HEK293T (cell line): ENCODE measurements at regions of chr14 and their contacts with region 1.

Region 1: DNA sequence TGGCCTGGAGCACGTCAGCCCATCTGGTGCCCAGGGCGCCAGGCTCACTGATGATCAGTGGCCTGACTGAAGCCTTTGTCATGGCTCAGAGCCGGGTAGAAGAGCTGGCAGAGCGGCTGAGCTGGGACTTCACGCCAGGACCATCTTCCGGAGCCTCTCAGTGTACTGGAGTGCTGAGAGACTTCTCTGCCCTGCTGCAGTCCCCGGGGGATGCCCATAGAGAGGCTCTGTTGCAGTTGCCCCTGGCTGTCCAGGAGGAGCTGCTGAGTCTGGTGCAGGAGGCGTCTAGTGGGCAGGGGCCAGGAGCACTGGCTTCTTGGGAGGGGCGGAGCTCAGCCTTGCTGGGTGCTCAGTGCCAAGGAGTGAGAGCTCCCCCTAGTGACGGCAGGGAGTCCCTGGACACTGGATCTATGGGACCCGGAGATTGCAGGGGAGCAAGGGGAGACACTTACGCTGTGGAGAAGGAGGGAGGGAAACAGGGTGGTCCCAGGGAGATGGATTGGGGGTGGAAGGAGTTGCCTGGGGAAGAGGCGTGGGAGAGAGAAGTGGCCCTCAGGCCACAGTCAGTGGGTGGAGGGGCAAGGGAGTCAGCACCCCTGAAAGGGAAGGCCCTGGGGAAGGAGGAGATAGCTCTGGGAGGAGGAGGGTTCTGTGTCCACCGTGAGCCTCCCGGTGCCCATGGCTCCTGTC is 2.0 kb downstream of the KHNYN start:
- DNase-seq: peak; percentile 86

Region 2: GRCh38 chr14:24299255-24300195 is 132.2 kb before region 1 on chr14 and contains the starts of genes DHRS1 and NOP9:
- CTCF ChIA-PET with region 1: interaction called, 5 read pairs
- POLR2A ChIA-PET with region 1: interaction called, 13 read pairs
- DNase-seq: peak; percentile 95

Region 3: DNA sequence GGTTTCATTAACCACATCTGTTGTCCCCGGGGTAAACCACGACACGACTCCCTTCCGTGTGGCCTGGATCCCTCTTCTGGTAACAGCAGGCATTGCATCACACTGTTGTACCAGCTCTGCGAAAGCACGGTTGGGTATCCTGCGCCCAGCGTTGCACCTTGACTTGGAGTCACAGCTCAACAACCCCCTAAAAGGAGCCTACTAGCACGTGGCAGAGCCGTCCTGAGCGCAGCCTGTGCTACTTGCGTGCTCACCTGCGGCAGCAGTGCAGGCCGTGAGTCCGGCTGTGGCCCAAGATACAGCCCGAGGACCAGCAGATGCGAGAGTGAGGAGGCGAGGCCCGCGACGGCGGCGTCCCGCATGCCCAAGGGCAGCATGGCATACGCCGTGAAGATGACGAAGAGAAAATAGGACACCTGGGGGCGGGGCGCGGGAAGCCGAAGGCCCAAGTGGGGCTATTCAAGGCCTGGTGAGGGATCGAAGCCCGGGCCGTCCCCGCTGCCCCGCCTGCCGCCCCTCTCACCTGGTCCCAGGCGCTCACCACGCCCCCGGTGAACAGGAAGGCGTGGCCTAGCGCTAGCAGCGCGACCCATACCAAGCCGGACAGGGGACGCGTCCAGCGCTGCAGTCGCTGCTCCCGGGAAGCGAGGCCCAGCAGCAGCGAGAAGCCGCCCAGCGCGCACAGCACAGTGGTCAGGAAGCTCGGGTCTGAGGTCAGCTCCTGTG is 99.3 kb before region 1 on chr14:
- CTCF ChIA-PET with region 1: interaction called, 145 read pairs
- POLR2A ChIA-PET with region 1: interaction called, 37 read pairs
- DNase-seq: peak; percentile 71

Region 4: DNA sequence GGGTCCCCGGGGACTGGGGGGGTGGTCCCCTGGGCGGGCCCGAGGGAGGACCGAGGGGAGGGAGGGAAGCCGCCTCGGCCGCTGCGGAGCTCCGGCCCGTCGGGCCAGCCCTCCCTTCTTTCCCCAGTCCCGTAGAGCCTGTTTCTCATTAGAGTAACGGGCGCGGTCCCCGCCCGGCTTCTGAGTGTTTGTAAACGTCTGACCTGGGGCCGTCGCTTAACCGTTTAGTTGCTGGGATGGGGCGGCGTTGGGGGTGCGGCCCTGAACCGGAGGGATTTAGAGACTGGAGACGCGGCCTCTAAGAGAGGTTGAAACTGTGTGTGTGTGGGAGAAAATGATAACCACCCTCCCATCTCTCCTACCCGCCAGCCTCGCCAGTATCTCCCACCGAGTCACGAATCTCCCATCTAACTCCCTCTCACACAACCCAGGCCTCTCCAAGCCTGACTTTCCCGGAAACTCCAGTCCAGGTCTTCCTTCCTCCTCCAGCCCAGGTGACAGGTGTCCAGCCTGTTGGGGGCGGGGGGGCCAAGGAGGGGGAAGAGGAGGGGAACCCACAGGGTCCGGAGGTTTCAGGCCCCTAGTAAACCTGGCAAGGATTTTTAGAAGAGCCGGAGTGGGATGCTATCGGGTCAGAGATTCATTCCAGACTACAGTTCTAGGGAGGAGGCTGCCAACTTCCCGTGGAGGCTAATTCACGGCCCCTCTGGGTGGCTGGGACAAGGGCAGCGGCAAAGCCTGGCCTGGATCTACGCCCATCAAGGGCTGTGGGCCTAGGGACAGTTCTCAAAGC is 64.8 kb before region 1 on chr14:
- CTCF ChIA-PET with region 1: interaction called, 68 read pairs
- POLR2A ChIA-PET with region 1: interaction called, 28 read pairs
- DNase-seq: peak; percentile 74

Region 5: DNA sequence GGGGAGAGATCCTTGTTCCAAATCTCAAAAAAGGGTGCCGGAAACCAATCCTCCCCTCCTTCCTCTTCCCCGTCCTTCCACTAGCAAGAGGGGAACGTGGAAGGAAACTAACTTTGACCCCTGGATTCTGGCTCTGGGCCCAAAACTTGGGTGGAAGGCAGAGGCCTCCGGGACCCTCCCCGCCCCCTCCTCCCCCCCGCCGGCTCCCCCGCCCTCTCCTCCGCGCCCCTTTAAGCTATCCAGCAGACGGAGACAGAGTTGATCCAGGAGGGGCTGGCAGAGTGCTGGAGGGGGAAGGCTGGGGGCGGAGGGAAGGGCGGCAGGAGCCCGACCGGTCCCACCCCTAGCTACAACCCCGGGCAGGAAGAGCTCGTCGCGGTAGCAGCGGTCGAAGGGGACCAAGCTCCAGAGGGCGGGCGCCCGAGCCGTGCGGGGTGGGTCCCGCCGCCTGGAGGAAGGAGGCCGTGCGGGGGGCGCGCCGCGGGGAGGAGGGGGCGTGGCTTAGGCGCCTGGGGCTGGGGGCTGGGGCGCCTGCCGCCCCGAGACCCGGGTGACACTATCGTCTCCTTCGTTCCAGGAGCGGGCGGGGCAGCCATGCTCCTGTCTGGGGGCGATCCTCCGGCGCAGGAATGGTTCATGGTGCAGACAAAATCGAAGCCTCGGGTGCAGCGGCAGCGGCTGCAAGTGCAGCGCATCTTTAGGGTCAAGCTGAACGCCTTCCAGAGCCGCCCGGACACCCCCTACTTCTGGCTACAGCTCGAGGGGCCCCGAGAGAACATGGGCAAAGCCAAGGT is 32.9 kb before region 1 on chr14 and contains the start of gene NYNRIN:
- CTCF ChIA-PET with region 1: interaction called, 9 read pairs
- POLR2A ChIA-PET with region 1: interaction called, 22 read pairs
- DNase-seq: peak; percentile 53

Region 6: DNA sequence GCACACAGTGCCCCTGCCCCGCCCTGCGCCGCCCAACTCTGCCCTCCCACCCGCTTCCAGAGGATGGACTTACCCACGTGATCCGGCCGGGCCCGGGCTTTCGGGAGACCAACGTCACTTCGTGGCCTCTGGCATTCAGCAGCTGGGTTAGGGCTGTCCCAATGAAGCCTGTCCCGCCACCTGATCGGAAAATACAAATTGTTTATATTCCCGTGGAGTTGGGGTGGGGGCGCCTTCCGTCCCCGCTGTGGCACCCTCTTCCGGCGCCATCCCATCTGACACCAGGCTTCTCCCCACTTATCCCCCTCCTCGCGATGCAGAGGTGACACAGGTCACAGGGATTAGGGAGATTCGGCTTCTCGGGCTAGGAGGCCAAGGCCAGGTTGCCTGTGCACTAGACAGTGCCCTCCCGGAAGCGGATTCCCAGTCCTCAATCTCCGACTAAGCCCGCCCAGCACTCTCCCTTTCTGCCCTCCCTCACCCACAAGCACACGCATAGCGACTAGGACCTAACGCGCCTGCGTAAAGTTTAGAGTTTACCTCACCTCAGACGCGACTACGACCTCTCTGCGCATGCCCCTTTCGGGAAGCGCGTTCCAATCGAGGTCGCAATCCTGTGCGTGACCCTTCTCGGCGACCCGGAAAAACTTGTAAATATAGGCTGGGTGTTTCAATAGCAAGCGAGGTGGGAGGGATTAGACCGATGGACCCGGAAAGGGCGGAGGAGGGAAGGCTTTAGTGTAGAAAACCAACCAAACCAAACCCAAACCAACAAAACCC is 10.7 kb after region 1 on chr14 and contains the start of gene SDR39U1:
- CTCF ChIA-PET with region 1: interaction called, 31 read pairs
- POLR2A ChIA-PET with region 1: interaction called, 46 read pairs
- DNase-seq: peak; percentile 96

Region 7: DNA sequence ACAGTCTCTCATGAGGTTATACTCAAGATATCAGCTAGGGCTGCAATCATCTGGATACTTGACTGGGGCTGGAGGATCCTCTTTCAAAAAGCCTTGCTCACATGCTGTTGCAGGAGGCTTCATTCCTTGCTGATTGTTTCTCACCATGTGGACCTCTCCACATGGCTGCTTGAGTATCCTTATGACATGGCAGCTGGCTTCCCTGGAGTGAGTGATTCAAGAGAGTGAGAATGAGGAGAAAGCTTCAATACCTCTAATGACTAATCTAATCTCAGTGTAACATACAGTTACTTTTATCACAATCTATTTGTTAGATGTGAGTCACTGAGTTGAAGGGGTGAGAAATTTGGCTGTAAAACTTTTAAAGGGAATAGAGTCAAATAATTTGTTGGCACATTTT is 25.3 kb after region 1 on chr14:
- CTCF ChIA-PET with region 1: no interaction called
- POLR2A ChIA-PET with region 1: no interaction called
- DNase-seq: no peak

Region 8: DNA sequence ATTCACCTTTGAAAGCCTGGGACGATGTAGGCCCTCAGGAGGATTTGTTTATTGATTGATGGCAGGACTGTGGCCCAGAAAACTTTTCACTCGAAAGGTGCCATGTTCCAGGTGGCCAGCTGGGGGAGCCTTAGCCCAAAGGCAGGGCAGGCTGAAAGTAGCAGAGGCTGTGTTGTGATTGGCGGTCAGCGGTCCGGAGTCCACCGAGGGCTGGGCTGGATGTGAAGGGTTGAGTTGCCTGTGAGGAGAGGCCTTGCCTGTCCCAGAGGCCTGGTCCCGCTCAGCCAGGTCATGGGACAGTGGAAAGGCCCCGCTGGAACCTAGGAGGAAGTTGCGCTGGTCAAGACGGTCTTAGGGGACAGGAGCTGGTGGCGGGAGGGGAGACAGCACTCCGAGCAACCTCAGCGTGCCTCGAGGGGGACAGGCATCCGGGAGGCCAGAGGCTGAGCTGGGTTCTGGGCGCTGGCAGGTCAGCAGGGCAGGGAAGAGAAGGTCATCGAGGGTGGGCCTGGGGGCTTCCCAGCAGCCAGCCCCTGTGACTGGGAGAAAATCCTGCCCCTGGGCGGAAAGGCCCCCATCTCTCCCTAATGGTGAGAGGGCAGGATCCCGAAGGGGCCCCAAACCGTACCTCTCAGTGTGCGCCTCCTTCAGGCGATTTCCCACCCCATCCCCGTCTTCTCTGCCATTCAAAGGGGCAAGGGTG is 50.1 kb after region 1 on chr14:
- CTCF ChIA-PET with region 1: no interaction called
- POLR2A ChIA-PET with region 1: no interaction called
- DNase-seq: peak; percentile 84

Region 9: DNA sequence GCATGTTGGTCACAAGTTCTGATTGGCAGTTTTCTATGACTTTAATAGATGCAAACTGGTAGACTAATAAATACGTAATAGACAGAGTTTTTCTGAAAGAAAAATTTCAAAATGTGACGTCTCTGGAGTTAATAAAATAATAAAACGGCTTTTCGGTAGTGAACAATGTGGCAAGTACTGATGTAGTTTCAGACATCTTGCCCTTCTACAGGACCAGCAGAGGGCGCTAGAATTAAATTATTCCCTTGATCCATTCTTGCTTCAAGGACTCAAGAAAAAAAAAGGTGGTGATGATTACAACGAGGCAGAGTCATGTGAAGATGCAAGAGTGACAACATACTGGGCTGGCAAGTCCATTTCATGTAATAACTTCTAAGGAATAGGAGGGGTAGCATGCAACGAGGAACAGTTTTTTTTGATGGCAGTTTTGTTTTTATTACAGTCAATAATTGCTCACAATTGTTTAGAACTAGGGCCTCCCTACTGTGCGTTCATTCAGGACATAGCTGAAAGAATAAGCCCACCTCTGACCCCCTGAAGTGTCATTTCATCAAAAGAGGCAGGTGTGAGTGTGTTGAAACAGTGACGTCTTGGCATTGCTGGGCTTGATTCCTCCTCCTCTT is 303.3 kb after region 1 on chr14:
- CTCF ChIA-PET with region 1: no interaction called
- POLR2A ChIA-PET with region 1: no interaction called
- DNase-seq: peak; percentile 48